AG04450 (cell line): ENCODE measurements at regions of chr15 and their contacts with region 1.

Region 1: DNA sequence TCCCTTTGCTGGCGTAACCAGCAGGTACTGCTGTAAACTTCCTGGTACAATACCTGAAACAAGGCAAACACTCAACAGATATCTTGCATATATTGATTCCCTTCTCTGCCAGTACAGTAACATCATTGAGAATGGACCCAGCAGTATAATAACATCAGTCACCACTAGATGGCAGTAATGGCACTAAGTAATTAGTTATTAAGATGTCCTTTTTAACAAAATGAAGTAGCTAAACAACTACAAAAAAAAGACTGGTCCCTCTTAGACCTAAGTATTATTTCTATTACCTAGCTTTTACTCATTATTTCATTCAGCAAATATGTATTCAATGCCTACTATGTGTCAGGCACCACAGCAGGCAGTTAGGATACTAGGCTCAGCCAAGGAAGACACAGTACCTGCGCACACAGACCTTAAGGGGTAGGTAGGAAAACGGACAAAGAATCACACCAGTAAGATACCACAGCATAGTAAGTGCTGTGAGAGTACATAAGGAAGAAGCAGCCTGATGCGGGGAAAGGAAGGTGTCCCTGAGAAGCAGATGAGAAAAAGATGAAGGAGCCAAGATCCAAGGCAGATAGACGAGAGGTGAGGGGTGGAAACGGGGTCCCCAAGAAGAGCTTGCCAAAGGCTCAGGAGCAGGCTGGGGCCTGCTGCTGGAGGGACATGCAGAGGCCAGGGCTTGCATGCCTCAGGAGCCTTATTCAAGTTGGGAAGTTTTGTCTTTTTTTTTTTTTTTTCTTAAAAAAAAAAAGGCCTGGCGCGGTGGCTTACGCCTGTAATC is 102.8 kb upstream of the CHD2 start:
- DNase-seq: peak; percentile 48
- H3K4me3 ChIP-seq: no peak overlapping the region
- H3K27ac ChIP-seq: peak overlapping the region; percentile 57
- H3K27me3 ChIP-seq: no peaks in the 10 kb centered on the region
- CTCF ChIP-seq: peak; percentile 66

Region 2: DNA sequence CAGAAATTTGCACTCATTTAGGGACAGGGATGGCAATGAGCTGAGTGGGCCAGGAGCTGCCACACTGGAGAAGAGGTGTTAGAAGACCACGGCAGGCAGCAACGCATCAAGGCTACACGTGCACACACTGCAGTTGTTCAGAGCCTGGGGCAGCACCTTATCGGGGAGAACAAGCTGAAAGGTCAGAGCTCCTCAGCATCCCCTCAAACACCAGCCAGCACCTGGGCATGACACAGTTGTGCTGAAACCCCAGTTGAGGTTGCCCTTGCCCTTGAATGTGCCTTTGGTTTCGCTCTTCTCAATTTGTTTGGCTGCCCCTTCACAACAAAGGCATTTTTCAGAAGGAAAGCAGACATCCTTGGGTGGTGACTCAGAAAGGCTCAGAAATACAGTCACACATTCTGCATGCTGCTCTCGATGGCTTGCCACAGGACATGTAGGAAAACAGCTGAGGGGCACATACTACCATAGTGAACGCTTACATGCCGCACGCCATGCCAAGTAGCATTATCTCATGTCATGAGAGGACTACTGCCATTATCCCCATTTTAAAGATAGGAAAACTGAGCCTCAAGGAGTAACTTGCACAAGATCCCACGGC is 346.0 kb before region 1 on chr15:
- CTCF ChIA-PET with region 1: no interaction called
- POLR2A ChIA-PET with region 1: no interaction called
- DNase-seq: peak; percentile 7
- H3K4me3 ChIP-seq: no peak overlapping the region
- H3K27ac ChIP-seq: peak overlapping the region; percentile 21
- H3K27me3 ChIP-seq: peaks cover 2% of the 10 kb centered on the region
- CTCF ChIP-seq: no peak

Region 3: DNA sequence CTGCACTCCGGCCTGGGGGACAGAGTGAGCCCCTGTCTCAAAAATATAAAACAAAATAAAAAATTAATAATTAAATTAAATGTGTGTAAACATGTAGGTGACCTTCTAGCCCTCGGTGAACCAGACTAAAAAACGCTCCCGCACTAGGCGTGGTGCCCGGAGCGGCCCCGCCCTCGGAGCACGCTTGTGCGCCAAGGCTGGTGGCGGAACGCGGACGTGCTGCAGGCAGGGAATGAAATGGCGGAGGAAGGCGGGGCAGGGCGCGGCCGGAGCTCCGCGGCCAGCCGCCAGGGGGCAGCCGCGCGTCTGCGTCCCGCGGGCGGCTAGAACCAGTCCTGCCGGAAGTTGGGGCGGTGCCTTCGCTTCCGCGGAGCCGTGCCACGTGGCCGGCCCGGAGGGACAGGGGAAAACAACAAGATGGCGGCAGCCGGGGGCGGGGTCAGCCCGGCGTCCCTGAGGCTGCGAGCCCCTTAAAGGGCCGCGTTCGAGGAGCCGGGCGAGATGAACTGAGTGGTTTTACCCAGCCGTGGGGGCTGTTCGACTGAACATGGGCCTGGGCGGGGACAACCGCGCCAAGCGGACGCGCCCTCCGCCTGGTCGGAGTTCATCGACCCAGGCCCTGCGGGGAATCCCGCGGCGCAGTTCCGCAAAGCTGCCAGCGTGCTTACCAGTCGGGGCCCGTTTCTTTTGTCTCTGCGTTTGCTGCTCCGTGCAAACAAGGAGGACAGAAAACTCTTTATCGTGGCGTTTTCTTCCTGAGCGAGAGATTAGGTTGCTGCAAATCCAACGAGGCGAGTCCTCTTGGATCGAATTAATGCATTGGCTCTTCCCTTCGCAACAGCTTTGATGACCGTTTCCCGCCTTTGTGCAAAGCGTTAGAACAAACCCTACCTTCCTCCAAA is 11.9 kb after region 1 on chr15:
- CTCF ChIA-PET with region 1: interaction called, 20 read pairs
- POLR2A ChIA-PET with region 1: interaction called, 11 read pairs
- DNase-seq: peak; percentile 94
- H3K4me3 ChIP-seq: peak overlapping the region; percentile 61
- H3K27ac ChIP-seq: peak overlapping the region; percentile 99
- H3K27me3 ChIP-seq: no peaks in the 10 kb centered on the region
- CTCF ChIP-seq: peak; percentile 73

Region 4: DNA sequence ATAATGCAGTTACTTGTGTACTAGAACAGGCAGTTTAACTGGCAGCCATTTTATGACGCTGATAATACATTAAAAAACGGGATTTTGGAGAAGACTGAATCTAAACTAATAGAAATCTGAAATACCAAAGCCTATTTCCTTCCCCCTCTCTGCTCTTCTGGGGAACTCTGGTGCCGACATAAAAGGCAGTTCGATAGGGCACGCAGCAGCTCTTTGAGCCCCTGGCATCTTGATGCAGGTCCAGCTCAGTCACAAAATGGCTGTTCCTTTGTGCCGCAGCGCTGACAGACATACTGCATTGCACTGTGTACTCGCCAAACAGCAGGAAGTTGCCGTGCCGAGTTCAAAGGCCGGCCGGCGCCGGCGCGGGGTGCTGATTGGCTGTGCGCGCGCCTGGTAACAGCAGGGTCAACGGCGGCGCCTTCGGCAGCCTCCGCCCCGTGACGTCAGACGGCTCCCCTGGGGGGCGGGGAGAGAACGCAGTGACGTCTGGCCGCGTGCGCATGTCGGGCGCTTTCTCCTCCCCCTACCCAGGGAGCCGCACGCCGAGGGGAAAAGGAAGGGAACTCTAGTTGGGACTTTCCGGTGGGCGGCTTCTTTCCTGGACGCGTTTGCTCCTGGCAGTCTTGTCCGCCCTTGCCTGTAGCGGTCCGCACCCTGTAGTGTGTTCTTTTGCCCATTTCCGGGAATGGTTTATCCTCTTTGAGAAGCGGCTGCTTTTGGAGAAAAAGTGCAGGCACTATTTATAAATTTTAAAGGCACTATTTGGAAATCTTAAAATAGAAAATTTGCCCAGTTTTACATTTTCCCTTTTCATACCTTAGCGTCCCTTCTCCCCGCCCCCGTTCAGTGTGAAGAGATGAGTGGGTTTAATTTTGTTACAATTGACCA is 106.8 kb after region 1 on chr15:
- CTCF ChIA-PET with region 1: interaction called, 20 read pairs
- POLR2A ChIA-PET with region 1: interaction called, 9 read pairs
- DNase-seq: peak; percentile 97
- H3K4me3 ChIP-seq: peak overlapping the region; percentile 74
- H3K27ac ChIP-seq: peak overlapping the region; percentile 97
- H3K27me3 ChIP-seq: no peaks in the 10 kb centered on the region
- CTCF ChIP-seq: no peak

Region 5: GRCh38 chr15:92930776-92931175 is 133.4 kb after region 1 on chr15:
- CTCF ChIA-PET with region 1: interaction called, 31 read pairs
- POLR2A ChIA-PET with region 1: no interaction called
- DNase-seq: peak; percentile 71
- H3K4me3 ChIP-seq: no peak overlapping the region
- H3K27ac ChIP-seq: peak overlapping the region; percentile 79
- H3K27me3 ChIP-seq: no peaks in the 10 kb centered on the region
- CTCF ChIP-seq: no peak

Region 6: GRCh38 chr15:92968926-92969651 is 171.7 kb after region 1 on chr15:
- CTCF ChIA-PET with region 1: interaction called, 10 read pairs
- POLR2A ChIA-PET with region 1: no interaction called
- DNase-seq: no peak
- H3K4me3 ChIP-seq: no peak overlapping the region
- H3K27ac ChIP-seq: no peak overlapping the region
- H3K27me3 ChIP-seq: no peaks in the 10 kb centered on the region
- CTCF ChIP-seq: no peak; the same call in 1 of the 2 replicates

Region 7: DNA sequence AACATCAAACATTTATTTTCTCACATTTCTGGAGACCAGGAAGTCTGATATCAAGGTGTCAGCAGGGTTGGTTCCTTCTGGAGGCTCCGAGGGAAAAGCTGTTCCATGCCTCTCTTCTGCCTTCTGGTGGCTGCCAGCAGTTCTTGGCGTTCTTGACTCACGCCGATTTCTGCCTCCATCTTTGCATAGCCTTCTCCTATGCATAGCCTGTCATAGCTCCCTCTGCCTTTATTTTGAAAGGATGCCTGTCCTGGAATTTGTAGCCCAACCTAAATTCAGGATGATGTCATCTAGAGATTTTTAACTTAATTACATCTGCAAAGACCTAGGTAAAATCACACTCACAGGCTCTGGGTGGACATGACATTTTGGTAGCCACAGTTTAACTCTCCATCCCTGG is 221.2 kb after region 1 on chr15:
- CTCF ChIA-PET with region 1: interaction called, 30 read pairs
- POLR2A ChIA-PET with region 1: interaction called, 7 read pairs
- DNase-seq: no peak
- H3K4me3 ChIP-seq: no peak overlapping the region
- H3K27ac ChIP-seq: no peak overlapping the region
- H3K27me3 ChIP-seq: no peaks in the 10 kb centered on the region
- CTCF ChIP-seq: peak; percentile 37